GM10248 (cell line): ENCODE measurements at regions of chr6 and their contacts with region 1.

Region 1: GRCh38 chr6:30821862-30822782 is 62.2 kb upstream of the DDR1 start:
- DNase-seq: peak; percentile 53
- CTCF ChIP-seq: peak; percentile 51

Region 2: GRCh38 chr6:30787954-30788353 is 34.2 kb before region 1 on chr6:
- CTCF ChIA-PET with region 1: interaction called, 12 read pairs
- POLR2A ChIA-PET with region 1: no interaction called
- DNase-seq: no peak
- CTCF ChIP-seq: no peak

Region 3: DNA sequence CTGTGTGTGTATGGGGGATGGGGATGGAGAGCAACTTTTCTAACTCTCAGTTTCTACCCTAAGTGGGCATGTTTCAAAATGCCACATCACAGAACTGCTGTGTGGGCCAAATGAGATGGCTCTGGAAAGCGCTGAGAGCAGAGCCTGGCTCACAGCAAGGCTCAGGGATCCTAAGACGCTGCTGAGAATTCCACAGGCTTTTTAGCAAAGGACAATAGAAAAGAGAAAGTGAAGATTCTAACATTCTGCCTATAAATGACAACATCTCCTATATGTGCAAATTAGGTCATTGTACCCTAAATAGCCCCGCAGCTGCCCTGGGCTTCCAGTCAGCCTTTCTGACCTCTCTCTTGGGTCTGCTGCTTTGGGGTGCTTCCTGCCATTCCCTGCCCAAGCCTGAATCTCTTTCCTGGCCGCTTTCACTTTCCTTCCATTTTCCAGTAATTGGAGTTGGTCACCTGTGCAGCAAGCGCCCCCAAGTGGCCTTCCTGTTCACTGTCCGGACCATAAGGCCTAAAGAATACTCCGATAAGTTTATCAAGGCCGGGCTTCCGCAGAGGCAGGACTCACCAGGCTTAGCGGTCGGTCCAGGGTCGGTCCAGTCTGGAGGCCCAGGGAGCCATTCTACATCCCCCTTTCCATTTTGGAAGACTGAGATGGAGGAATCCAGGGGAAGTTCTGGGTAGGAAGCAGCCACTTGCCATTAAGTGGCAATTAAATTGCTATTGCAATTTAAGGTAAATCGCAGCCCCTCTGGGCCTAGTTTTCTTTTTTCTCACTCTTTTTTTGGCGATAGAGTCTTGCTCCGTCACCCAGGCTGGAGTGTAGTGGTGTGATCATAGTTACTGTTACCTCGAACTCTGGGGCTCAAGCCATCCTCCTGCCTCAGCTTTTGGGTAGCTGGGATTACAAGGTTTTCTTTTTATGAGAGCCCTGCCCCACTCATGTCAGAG is 55.6 kb after region 1 on chr6:
- CTCF ChIA-PET with region 1: interaction called, 30 read pairs
- POLR2A ChIA-PET with region 1: interaction called, 10 read pairs
- DNase-seq: peak; percentile 73
- CTCF ChIP-seq: peak; percentile 82

Region 4: GRCh38 chr6:31079656-31080261 is 257.6 kb after region 1 on chr6:
- CTCF ChIA-PET with region 1: interaction called, 29 read pairs
- POLR2A ChIA-PET with region 1: no interaction called
- DNase-seq: peak; percentile 69
- CTCF ChIP-seq: peak; percentile 78